Cardiac septum (tissue), 1 donor: ENCODE measurements at regions of chr16 and their contacts with region 1.

Region 1: GRCh38 chr16:8885674-8886592 is 3.8 kb downstream of the LITAFD start:
- DNase-seq: no peak

Region 2: GRCh38 chr16:8567750-8568617 is 317.9 kb before region 1 on chr16:
- intact Hi-C with region 1: loop called (anchors 5 kb)
- DNase-seq: peak; percentile 79

Region 3: DNA sequence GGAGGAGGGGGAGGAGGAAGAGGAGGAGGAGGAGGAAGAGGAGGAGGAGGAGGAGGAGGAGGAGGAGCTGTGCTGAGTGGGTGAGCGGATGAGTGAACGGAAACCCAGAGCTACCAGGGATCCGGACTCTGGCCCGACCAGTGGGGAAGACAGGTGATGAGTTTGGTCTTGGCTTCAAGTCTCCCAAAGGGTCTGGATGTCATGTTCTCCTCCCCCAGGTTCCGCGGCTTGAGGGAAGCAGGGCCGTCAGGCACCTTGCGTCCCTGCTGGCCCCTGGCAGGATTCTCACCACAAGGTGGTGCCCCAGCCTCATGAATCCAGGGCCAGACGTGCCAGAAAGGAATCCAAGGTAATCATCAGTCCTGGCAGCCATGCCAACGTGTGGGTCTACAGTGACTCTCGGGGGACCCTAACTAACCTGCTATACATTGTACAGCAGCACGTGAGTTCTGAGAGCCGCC is 225.1 kb before region 1 on chr16:
- intact Hi-C with region 1: loop called (anchors 2 kb)
- DNase-seq: no peak

Region 4: DNA sequence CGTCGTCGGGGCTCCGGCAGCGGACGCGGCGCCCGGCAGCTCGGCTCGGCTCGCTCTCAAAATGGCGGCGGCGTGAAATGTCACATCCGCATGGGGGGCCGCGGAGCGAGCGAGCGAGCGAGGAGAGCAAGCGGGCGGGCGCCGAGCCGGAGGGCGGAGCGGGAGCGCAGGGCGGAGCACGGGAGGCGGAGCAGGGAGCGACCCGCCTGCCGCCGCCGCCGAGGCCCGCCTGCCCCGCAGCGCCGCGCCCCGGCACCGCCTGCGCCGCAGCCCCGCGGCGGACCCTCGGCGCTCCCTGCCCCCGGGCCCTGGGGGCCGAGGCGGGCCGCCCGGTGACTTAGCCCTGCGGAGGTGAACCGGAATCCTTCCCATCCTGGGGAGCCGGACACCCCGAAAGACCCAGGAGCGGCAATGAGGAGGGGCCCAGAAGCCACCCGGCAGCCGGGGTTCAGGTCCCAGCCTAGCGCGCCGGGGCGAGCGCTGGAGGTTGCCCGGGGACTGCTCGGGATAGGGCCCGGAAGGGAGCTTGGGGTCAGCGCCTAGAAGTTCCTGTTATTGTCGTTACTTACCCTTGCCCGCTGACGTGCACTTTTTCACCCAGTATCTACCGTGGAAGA is 78.0 kb after region 1 on chr16 and contains the start of gene USP7:
- intact Hi-C with region 1: no loop called
- DNase-seq: peak; percentile 97
- total RNA-seq, gene USP7: 74.6 TPM